ENCODE measurements at regions of chr17 and their contacts with region 1.

Region 1: GRCh38 chr17:45385331-45385997 is 47.2 kb downstream of the ARHGAP27 start:
- DNase-seq: peak; percentile 82 to 94 (median 87)
- H3K4me3 ChIP-seq: no peak overlapping the region
- H3K27ac ChIP-seq: no peak overlapping the region
- H3K4me1 ChIP-seq: no peaks in the 10 kb centered on the region
- H3K27me3 ChIP-seq: no peaks in the 10 kb centered on the region
- CTCF ChIP-seq: peak; percentile 97 to 99 (median 98)
- POLR2A ChIP-seq: no peak

Region 2: GRCh38 chr17:45221066-45221996 is 164.1 kb before region 1 on chr17 and contains the start of gene FMNL1:
- intact Hi-C with region 1: loop called in 1 of 2 experiments (anchors 5 kb)
- DNase-seq: peak in 4 of 7 donors; percentile 36 to 40 (median 39)
- H3K4me3 ChIP-seq: peak within 1 kb of the TSS in 2 of 4 donors; percentile 6 to 79
- H3K27ac ChIP-seq: peak within 1 kb of the TSS in 1 of 5 donors; percentile 44
- H3K4me1 ChIP-seq: peaks cover 0 to 7% of the 10 kb centered on the region in 2 donors
- H3K27me3 ChIP-seq: no peaks in the 10 kb centered on the region
- CTCF ChIP-seq: no peak
- POLR2A ChIP-seq: no peak
- total RNA-seq, gene FMNL1: 0.72 to 20.3 (median 13.9) TPM

Region 3: GRCh38 chr17:45270828-45271418 is 114.5 kb before region 1 on chr17:
- intact Hi-C with region 1: loop called (anchors 5 kb)
- DNase-seq: no peak
- H3K4me3 ChIP-seq: no peak overlapping the region
- H3K27ac ChIP-seq: no peak overlapping the region
- H3K4me1 ChIP-seq: no peaks in the 10 kb centered on the region
- H3K27me3 ChIP-seq: no peaks in the 10 kb centered on the region
- CTCF ChIP-seq: peak; percentile 14 to 45 (median 34)
- POLR2A ChIP-seq: no peak

Region 4: DNA sequence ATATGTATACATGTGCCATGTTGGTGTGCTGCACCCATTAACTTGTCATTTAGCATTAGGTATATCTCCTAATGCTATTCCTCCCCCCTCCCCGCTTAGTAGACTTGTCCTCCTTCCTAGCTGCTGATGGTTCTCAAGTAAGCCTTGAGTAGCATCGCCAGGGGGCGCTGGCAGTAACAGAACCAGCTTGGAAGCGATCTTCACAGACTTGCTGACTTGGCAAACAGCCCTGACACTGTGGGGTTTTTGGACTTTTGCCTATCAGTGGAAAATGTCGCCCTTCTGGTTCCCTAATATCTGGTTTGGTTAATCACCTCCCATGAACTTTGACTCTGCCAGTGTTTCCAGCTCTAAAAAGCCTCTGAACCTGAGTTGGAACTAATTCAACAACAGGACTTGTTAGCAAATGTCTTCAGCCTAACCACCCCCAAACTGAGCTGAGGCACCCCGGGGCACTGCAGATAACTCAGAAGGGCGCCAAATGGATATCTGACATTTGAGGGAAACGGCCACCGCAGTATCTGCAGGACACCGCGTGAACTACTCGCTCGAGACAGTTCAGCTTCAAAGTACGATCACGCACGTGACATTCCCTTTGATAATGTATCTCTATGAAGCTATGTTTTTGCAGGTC is 108.1 kb before region 1 on chr17:
- intact Hi-C with region 1: loop called (anchors 5 kb)
- DNase-seq: peak; percentile 89 to 98 (median 96)
- H3K4me3 ChIP-seq: peak overlapping the region in 1 of 4 donors; percentile 0
- H3K27ac ChIP-seq: peak overlapping the region in 4 of 5 donors; percentile 14 to 74 (median 34)
- H3K4me1 ChIP-seq: peaks cover 10 to 16% of the 10 kb centered on the region in 2 donors
- H3K27me3 ChIP-seq: no peaks in the 10 kb centered on the region
- CTCF ChIP-seq: peak; percentile 69 to 95 (median 94)
- POLR2A ChIP-seq: peak in 1 of 2 donors; percentile 29

Measured in adrenal gland (tissue), 19 donors.